Activated CD4-positive, alpha-beta memory T cell treated with anti-CD3 and anti-CD28 coated beads for 36 hours (primary cell): ENCODE measurements at regions of chr9 and their contacts with region 1.

Region 1: DNA sequence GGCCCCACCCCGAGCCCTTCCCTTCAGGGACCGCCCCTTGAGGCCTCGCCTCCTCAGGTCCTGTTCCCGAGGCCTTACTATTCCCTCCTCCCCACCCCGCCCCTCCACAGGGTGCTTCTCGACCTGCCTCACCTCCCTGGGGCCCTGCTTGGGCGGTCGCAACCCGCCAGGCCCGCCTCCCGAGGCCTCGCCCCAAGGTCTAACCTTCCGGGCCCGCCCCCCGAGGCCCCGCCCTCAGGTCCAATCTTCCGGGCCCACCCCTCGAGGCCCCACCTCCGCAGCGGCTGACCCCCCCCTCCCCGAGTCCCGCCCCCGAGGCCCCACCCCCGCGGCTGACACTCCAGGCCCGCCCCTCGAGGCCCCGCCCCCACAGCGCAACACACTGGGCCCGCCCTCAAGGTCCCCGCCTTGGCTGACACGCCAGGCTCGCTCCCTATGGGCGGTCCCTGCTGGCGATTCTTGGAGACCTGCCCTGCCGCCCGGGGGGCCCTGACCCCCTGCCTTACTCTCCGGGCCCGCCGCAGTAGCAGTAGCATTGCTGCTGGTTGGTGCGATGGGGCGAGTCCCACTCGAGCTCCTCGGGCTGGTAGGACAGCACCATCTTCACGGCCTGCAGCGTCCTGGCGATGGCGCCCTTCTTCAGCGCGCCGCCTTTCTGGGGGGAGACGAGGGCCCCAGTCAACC is 8.2 kb downstream of the PHF19 start:
- DNase-seq: peak; percentile 97
- H3K4me3 Mint-ChIP-seq: peak overlapping the region; percentile 80
- H3K27ac Mint-ChIP-seq: peak overlapping the region; percentile 87
- H3K4me1 Mint-ChIP-seq: peaks cover 46% of the 10 kb centered on the region
- H3K27me3 Mint-ChIP-seq: no peaks in the 10 kb centered on the region

Region 2: DNA sequence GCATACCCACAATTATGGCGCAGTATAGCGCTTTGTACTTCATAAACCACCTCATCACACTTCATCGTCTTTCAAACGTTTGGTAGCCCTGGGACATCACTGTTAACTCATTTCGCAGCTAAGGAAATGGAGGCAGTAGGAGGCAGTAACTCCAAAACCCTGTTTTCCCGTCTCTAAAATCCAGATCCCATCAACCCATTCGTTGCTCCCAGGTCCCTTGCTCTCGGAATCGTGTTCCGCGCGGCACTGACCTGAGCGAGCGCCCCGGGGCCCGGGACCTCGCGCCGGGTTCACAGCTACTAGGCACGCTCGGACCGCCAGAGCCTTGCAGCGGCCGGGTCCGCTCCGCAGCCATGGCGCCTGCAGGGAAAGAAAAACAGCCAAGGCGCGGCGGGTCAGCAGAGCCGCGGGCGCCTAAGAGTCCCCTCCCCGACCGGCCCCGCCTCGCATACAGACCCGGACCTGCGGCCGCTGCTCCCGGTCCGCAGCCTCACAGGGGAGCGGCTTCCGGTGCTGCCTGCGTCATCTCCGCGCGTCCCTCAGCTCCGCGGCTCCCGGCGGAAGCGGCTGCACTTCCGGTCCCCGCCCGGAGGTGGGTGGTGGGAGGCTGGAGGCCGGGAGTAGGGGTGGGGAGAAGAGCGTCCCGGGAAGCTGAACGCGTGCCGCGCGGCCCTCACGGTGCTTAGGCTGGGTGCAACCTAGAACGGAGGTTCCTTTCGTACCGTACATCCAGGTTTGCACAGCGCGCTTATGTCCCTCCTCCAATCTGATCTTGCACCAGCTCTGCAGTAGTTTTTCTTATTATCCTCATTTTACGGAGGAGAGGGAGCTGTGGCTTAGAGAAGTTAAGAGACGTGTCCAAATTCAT is 75.7 kb before region 1 on chr9 and contains the start of gene FBXW2:
- CTCF ChIA-PET with region 1: interaction called, 5 read pairs
- POLR2A ChIA-PET with region 1: interaction called, 4 read pairs
- intact Hi-C with region 1: loop called (anchors 2 kb)
- DNase-seq: peak; percentile 95
- H3K4me3 Mint-ChIP-seq: peak within 1 kb of the TSS; percentile 80
- H3K27ac Mint-ChIP-seq: peak within 1 kb of the TSS; percentile 93
- H3K4me1 Mint-ChIP-seq: peaks cover 42% of the 10 kb centered on the region
- H3K27me3 Mint-ChIP-seq: no peaks in the 10 kb centered on the region
- total RNA-seq, gene FBXW2: 70.2 to 72.5 TPM

Region 3: DNA sequence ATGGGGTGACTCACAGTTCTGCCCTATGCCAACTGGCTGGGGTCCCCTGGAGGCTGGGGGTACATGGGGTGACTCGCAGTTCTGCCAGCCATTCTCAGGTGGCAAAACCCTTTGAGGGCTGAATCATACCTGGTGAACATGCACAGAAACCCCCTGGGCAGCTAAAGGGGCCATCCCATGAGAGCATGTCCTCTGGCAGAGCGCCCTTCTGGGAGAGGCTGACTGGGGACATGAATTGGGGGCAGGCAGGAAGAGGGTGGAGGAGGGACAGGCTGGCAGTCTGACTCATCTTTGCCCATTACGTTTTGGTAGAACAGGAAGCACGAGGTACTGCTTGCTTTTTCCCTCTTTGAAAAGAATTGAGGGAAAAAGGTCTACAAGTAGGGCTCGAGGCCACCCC is 41.1 kb after region 1 on chr9:
- CTCF ChIA-PET with region 1: interaction called, 4 read pairs
- POLR2A ChIA-PET with region 1: interaction called, 3 read pairs
- intact Hi-C with region 1: loop called (anchors 2 kb)
- DNase-seq: peak; percentile 78
- H3K4me3 Mint-ChIP-seq: peak overlapping the region; percentile 32
- H3K27ac Mint-ChIP-seq: peak overlapping the region; percentile 94
- H3K4me1 Mint-ChIP-seq: peaks cover 91% of the 10 kb centered on the region
- H3K27me3 Mint-ChIP-seq: no peaks in the 10 kb centered on the region

Region 4: GRCh38 chr9:121545875-121546423 is 677.1 kb after region 1 on chr9:
- CTCF ChIA-PET with region 1: no interaction called
- POLR2A ChIA-PET with region 1: no interaction called
- intact Hi-C with region 1: no loop called
- DNase-seq: peak; percentile 79
- H3K4me3 Mint-ChIP-seq: no peak overlapping the region
- H3K27ac Mint-ChIP-seq: no peak overlapping the region
- H3K4me1 Mint-ChIP-seq: peaks cover under 1% of the 10 kb centered on the region
- H3K27me3 Mint-ChIP-seq: peaks cover 18% of the 10 kb centered on the region